ENCODE measurements at regions of chr5 and their contacts with region 1.

Region 1: DNA sequence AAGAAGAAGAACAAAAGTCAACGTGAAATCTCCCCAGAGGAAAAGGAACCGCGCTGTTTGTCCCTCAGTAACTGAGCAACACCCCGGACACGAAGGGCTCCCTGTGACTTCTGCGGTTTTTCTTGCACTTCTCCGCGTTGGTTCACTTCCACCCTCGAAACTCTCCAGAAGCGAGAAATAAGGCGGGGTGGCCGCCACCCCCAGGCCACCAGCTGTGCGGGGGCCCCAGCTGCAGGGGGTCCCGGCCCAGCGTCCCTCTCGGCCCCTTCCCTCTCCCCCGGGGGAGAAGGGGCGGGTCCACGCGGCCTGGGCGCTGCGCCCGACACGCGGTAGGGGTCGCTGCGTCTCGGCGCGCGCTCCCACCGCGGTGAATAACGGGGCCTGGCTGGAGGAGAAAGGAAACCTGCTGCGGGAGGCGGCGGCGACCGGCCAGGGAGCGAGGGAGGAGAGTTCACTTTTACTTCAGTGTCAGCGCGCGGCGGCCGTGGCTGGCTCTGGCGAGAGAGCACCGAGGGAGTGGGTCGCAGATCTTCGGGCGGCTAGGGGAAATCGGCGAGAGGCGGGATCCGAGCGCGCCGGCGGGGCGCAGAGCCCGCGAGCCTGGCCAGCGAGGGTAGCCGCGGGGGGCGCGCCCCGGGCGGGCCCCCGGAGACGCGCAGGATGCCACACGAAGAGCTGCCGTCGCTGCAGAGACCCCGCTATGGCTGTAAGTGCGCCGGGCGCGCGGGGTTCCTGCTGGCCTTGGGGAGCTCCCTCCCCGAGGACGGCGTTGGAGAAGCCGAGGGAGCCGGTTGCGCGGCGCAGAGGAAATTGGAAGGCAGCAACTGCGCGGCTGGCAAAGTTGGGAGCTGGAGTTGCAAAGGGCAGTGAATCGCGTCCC is at the start of gene IQGAP2:
- DNase-seq: peak; percentile 80
- H3K4me3 Mint-ChIP-seq: peak within 1 kb of the TSS; percentile 95
- H3K27ac Mint-ChIP-seq: peak within 1 kb of the TSS; percentile 94
- H3K4me1 Mint-ChIP-seq: peaks cover 43% of the 10 kb centered on the region
- H3K27me3 Mint-ChIP-seq: peaks cover 14% of the 10 kb centered on the region
- total RNA-seq, gene IQGAP2: 28.3 and 29.5 TPM in 2 replicates

Region 2: DNA sequence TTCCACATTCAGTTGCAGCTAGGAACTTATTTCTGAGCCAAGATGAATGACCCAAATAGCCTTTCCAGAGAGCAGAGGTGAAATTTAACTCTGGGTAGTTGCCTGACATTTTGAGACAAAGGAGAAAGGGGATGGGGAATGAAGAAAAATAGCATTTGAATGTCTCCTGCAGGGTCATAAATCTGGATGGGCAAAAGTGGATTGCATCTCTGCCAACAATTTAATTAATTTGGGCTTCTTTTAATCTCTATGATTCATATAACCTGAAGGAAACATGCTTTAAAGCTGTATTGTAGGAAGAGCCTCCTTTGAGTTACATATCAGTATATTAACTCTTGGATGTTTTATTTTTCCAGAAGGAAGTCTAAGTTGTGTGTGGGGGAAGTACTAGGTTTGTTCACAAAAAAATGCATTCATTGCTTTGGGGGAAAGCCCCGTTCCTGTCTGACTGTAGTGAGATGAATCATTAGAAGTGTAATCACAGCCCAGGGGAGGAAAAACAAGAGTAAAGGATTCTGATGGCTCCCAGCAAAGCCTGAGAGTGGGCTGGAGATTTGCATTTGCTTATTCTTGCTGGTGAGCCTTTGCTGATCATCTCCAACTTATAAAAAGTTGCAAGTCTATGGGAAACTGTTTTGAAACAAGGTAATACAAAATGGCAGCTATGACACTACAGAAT is 133.1 kb before region 1 on chr5:
- intact Hi-C with region 1: loop called (anchors 1 kb)
- DNase-seq: no peak
- H3K4me3 Mint-ChIP-seq: peak overlapping the region; percentile 49
- H3K27ac Mint-ChIP-seq: peak overlapping the region; percentile 81
- H3K4me1 Mint-ChIP-seq: peaks cover 32% of the 10 kb centered on the region
- H3K27me3 Mint-ChIP-seq: no peaks in the 10 kb centered on the region

Region 3: DNA sequence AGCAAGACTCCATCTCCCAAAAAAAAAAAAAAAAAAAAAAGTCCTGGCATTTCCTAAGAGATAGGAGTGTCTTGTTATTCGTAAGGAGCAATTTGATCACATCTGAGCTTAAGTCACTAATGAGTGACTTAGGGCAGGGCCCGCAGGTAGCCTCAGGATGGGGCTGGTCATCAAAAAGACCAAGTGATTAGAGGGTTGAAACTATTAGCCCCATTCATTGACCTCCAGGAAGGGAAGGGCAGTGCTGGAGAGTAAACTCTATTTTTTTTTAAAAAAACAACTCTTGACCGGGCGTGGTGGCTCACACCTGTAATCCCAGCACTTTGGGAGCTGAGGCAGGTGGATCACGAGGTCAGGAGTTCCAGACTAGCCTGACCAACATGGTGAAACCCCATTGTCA is 46.3 kb before region 1 on chr5:
- intact Hi-C with region 1: no loop called
- DNase-seq: no peak
- H3K4me3 Mint-ChIP-seq: no peak overlapping the region
- H3K27ac Mint-ChIP-seq: no peak overlapping the region
- H3K4me1 Mint-ChIP-seq: no peaks in the 10 kb centered on the region
- H3K27me3 Mint-ChIP-seq: peaks cover 9% of the 10 kb centered on the region

Region 4: GRCh38 chr5:76379316-76379715 is 23.8 kb before region 1 on chr5:
- intact Hi-C with region 1: no loop called
- DNase-seq: no peak
- H3K4me3 Mint-ChIP-seq: no peak overlapping the region
- H3K27ac Mint-ChIP-seq: no peak overlapping the region
- H3K4me1 Mint-ChIP-seq: peaks cover 20% of the 10 kb centered on the region
- H3K27me3 Mint-ChIP-seq: no peaks in the 10 kb centered on the region

Region 5: DNA sequence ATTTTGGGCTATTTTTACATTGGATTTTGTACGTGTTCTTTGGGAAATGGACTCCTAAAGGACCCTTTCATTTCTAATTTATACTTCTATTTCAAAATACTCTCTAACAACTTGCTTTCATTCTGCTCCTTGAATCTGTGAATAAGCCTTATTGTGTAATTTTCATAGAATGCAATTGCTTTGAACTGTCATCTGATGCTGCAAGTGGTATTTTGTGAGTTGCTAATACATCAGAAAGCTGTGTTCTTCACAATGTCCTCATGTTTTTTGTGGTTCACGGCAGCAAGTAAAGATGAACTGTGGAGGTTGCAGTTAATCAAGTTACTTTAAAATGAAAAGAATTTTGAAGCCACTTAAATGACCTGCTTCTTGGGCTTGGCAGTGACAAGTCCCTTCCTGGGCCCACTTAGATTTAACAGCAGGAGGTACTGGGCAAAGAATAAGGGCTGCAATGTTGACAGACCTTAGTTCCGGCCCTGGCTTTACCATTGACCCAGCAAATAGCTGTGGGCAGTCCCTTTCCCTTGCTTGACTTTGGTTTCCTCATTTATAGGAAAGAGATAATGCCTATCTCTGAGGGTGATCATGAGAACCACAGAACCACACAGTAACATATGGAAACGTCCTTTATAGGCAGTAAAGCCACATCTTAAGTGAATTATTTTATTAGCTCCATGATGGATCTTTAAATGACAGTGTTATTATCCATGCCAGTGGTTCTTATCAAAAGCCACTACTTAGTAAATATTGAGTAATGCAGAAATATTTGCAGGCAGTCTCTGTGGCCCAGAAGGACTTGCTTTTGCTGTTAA is 54.8 kb after region 1 on chr5:
- intact Hi-C with region 1: loop called (anchors 5 kb)
- DNase-seq: no peak
- H3K4me3 Mint-ChIP-seq: no peak overlapping the region
- H3K27ac Mint-ChIP-seq: no peak overlapping the region
- H3K4me1 Mint-ChIP-seq: peaks cover 27% of the 10 kb centered on the region
- H3K27me3 Mint-ChIP-seq: no peaks in the 10 kb centered on the region

Region 6: GRCh38 chr5:76544268-76544926 is 141.3 kb after region 1 on chr5:
- intact Hi-C with region 1: loop called (anchors 1 kb)
- DNase-seq: peak; percentile 33
- H3K4me3 Mint-ChIP-seq: peak overlapping the region; percentile 75
- H3K27ac Mint-ChIP-seq: peak overlapping the region; percentile 90
- H3K4me1 Mint-ChIP-seq: peaks cover 83% of the 10 kb centered on the region
- H3K27me3 Mint-ChIP-seq: no peaks in the 10 kb centered on the region

Region 7: GRCh38 chr5:76736679-76737556 is 333.8 kb after region 1 on chr5:
- intact Hi-C with region 1: loop called (anchors 1 kb)
- DNase-seq: no peak
- H3K4me3 Mint-ChIP-seq: no peak overlapping the region
- H3K27ac Mint-ChIP-seq: peak overlapping the region; percentile 67
- H3K4me1 Mint-ChIP-seq: peaks cover 37% of the 10 kb centered on the region
- H3K27me3 Mint-ChIP-seq: no peaks in the 10 kb centered on the region